HAP-1 (cell line): ENCODE measurements at regions of chr1 and their contacts with region 1.

Region 1: DNA sequence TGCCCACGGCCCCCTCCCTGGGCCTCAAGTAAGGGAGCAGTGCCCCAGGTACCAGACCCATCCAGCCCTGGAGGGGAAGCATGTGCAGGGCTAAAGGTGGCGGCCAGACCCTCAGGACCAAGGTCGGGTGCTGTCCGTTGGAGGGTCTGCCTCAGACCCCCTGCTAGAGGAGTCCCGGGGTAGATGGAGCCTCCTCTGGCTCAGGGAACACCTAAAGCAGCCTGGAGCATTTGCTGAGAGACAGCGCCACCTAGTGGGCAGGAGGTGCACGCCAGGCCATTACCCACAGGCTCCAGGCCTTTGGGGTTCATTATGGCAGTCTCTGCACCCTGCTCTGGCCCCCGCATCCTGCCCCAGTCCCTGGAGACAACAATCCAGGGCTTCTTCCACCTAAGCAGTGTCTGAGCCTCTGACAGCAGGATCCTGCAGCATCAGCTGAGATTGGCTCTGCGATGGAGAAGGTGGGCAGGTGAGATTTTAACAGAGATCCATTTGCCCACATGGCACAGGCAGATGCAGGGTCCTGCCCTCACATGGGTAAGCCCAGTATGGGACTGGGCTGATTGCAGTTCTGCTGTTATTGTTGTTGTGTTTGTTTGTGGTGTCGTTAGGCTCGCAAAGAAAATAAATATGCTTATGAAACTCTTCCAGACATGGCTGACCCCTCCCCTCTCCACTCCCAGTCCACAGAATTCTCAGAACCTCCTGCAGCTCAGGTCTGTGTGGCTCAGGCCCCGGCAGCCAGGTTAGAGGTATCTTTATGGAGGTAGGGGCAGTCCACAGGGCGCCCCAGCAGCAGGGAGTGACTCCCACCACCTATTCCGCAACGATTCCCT is 42.4 kb downstream of the CTNNBIP1 start:
- DNase-seq: peak; percentile 68 to 88
- H3K4me3 ChIP-seq: no peak overlapping the region
- H3K4me1 ChIP-seq: no peaks in the 10 kb centered on the region
- H3K27me3 ChIP-seq: no peaks in the 10 kb centered on the region

Region 2: GRCh38 chr1:9629445-9630201 is 238.0 kb before region 1 on chr1:
- in situ Hi-C with region 1: loop called (anchors 5 kb)
- DNase-seq: no peak
- H3K4me3 ChIP-seq: no peak overlapping the region
- H3K4me1 ChIP-seq: peaks cover 4% of the 10 kb centered on the region
- H3K27me3 ChIP-seq: no peaks in the 10 kb centered on the region

Region 3: GRCh38 chr1:9724706-9725476 is 142.7 kb before region 1 on chr1:
- in situ Hi-C with region 1: loop called (anchors 10 kb)
- DNase-seq: peak; percentile 35 to 80
- H3K4me3 ChIP-seq: no peak overlapping the region
- H3K4me1 ChIP-seq: no peaks in the 10 kb centered on the region
- H3K27me3 ChIP-seq: no peaks in the 10 kb centered on the region

Region 4: DNA sequence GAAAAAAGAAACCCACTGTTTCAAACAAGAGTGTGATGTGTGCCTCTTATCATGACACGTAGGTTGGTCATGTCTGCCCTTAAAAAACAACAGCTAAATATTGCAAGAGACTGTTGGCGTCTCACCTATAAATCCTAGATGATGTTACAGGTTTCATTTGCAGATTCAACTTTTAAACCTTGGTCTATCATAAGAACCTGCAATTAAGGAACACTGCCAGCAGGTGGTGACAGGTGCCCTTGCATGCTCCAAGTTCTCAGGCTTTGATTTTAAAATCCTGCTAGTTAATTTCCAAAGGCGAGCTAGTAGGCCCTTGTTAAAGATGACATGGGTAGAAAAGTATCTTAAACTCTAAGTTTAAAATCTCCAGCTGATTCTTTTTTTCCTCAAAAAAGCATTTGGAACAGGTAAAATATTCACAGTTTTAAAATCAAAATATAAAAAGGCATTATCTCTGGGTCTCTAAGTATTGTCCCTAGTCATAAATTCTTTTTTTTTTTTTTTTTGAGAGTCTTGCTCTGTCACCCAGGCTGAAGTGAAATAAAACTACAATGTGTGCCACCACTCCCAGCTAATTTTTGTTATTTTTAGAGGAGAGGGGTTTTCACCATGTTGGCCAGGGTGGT is 83.0 kb before region 1 on chr1:
- in situ Hi-C with region 1: loop called (anchors 5 kb)
- DNase-seq: peak; percentile 60 to 67
- H3K4me3 ChIP-seq: no peak overlapping the region
- H3K4me1 ChIP-seq: peaks cover 9% of the 10 kb centered on the region
- H3K27me3 ChIP-seq: no peaks in the 10 kb centered on the region